Activated CD4-positive, alpha-beta memory T cell treated with anti-CD3 and anti-CD28 coated beads for 36 hours (primary cell): ENCODE measurements at regions of chr5 and their contacts with region 1.

Region 1: DNA sequence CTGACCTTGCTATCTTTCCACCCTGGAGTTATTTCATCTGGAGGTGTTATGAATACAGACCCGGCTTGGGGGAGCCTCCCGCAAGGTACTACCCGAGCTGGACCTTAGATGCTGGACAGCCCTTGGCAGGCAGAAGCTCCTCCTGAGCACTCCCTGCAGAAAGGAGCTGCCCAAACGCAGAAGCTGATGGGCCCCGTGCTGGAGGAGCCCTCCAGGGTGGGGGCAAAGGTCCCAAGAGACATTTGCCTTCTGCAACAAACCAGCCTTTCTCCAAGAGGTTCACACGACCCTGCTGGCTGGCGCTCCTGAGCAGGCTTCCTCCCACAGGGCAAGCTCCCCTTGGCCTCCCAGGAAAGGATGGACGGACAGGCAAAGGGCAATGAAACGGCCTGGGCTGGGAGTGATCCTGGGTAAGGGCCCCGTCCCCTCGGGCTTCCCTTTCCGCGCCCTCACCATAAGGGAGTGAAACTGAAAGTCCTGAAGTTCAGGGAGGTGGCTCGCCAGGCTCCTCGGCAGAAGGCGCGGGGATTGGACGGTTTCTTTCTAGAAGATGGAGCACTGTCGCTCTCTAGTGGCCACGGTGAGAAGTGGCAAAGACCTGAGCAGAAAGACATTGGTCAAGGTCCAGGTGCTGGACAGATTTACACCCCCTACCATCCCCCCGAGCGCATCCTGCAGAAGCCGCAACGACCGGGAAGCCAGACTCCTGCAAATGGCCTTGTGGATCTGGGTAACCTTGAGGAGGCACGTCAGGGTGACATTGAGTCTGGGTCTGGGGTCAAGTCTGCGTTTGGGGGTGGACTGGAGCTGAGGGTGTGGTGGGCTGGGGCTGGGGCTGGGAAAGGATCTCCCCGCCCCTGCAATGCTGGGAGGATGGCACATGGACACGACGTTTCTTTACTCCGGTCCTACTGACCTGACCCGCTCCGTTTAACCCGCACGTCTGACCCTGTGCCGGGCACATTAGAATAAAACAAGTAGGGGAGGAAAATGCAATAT is 56.4 kb downstream of the NEURL1B start:
- DNase-seq: peak; percentile 88
- H3K4me3 Mint-ChIP-seq: peak overlapping the region; percentile 76
- H3K27ac Mint-ChIP-seq: peak overlapping the region; percentile 54
- H3K4me1 Mint-ChIP-seq: peaks cover 13% of the 10 kb centered on the region
- H3K27me3 Mint-ChIP-seq: peaks cover 12% of the 10 kb centered on the region

Region 2: GRCh38 chr5:172458976-172459782 is 238.2 kb before region 1 on chr5:
- CTCF ChIA-PET with region 1: interaction called, 53 read pairs
- POLR2A ChIA-PET with region 1: no interaction called
- intact Hi-C with region 1: loop called (anchors 1 kb)
- DNase-seq: no peak
- H3K4me3 Mint-ChIP-seq: no peak overlapping the region
- H3K27ac Mint-ChIP-seq: no peak overlapping the region
- H3K4me1 Mint-ChIP-seq: peaks cover 12% of the 10 kb centered on the region
- H3K27me3 Mint-ChIP-seq: peaks cover 12% of the 10 kb centered on the region

Region 3: GRCh38 chr5:172479044-172479783 is 218.2 kb before region 1 on chr5:
- CTCF ChIA-PET with region 1: interaction called, 23 read pairs
- POLR2A ChIA-PET with region 1: no interaction called
- intact Hi-C with region 1: loop called (anchors 1 kb)
- DNase-seq: peak; percentile 77
- H3K4me3 Mint-ChIP-seq: no peak overlapping the region
- H3K27ac Mint-ChIP-seq: no peak overlapping the region
- H3K4me1 Mint-ChIP-seq: no peaks in the 10 kb centered on the region
- H3K27me3 Mint-ChIP-seq: peaks cover 3% of the 10 kb centered on the region

Region 4: DNA sequence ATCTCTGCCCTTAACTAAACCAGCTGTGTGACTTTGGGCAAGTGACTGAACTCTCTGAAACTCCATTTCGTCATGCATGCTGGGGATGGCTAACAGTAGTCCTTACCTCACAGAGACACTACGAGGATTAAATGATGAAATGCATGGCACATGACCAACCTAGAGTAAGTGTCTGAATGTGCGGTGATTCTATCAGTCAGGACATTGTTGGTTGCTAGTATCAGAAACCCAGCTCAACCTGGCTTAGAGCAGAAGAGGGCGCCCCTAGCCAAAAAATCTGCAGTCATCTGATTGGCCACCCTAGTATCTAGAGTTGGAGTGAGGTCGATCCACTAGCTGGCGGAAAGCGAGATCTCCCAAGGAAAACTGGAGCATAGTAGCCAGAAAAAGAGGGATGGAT is 31.2 kb before region 1 on chr5:
- CTCF ChIA-PET with region 1: interaction called, 13 read pairs
- POLR2A ChIA-PET with region 1: no interaction called
- intact Hi-C with region 1: no loop called
- DNase-seq: no peak
- H3K4me3 Mint-ChIP-seq: no peak overlapping the region
- H3K27ac Mint-ChIP-seq: no peak overlapping the region
- H3K4me1 Mint-ChIP-seq: no peaks in the 10 kb centered on the region
- H3K27me3 Mint-ChIP-seq: no peaks in the 10 kb centered on the region

Region 5: DNA sequence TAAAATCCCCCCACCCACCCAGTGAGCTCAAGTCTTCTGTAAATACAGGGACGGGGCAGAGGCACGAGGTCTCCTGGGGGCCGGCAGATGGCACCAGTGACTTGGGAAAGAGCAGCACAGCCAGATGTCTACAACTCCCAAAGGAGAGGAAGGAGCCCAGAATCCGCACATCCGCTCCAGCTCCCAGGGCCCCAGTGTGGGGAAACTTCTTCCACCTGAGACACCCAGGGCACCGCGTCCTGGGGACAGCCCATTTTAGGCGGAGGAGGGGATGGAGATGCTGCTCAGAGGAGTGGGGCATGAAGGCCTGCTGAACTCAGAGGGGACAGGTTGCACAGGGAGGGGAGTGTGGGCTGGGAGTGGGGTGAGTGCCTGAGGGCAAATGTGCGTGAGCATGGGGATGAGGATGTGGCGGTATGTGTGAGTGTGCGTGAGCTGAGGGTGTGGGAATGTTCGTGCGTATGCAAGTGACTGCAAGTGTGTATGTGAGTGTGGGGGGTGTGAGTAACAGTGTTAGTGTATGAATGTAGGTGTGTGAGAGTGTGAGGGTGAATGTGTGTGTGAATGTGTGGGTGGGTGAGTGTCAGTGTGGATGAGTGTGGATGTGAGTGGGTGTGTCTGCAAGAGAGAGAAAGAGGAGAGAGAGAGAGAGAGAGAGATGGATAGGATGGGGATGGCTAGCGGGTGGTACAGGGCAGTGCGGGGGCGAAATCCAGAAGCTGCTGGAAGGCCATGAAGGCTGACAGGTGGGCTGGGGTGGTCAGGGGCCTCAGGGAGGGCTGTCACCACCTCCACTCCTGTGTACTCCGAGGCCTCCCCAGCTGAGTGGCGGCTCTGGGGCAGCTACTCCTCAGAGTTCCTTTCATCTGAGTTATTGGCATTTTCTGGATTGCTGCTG is 10.1 kb after region 1 on chr5:
- CTCF ChIA-PET with region 1: interaction called, 37 read pairs
- POLR2A ChIA-PET with region 1: no interaction called
- intact Hi-C with region 1: no loop called
- DNase-seq: peak; percentile 36
- H3K4me3 Mint-ChIP-seq: no peak overlapping the region
- H3K27ac Mint-ChIP-seq: no peak overlapping the region
- H3K4me1 Mint-ChIP-seq: no peaks in the 10 kb centered on the region
- H3K27me3 Mint-ChIP-seq: peaks cover 33% of the 10 kb centered on the region